Cardiac septum (tissue), 1 donor: ENCODE measurements at regions of chr12 and their contacts with region 1.

Region 1: DNA sequence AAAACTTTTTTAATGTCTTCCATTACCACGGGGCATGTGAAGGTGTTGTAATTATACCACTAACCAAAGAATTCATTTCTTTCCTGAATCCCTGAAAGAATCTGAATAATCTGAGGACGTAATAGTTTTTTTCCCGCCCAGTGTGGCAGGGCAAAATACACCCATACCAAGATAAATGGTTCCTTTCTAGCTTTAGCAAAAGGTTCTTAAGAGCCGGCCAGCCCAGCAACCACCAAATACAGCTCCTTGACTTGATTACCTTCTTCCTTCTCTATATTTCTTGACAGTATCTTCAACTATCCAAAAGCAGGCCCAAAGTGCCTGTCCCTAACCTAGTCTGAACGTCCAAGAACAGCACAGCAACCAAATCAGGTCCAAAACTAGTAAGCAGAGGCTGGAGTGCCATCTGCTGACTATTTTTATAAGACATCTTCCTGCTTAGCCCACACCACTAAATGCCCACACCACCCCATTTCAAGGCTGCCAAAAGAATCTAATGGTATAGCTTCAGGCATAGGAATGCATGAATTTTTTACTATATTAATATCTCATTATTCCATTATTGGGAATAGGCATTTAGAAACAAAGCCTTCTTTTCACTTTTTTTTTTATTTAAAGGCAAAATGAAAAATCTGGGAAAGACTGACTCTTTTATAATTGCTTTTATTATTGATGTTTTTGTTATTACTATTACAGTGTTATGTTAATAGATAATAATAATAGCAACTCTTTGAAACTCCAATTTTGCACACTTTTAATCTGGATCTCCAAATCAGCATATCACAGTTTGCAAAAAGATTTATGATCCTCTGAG is 524.4 kb downstream of the MED13L start:
- DNase-seq: no peak

Region 2: GRCh38 chr12:114662512-114663177 is 1090.5 kb before region 1 on chr12:
- intact Hi-C with region 1: loop called (anchors 2 kb)
- DNase-seq: no peak

Region 3: GRCh38 chr12:115451780-115452736 is 301.1 kb before region 1 on chr12:
- intact Hi-C with region 1: loop called (anchors 5 kb)
- DNase-seq: no peak

Region 4: GRCh38 chr12:115660211-115660805 is 92.8 kb before region 1 on chr12:
- intact Hi-C with region 1: loop called (anchors 5 kb)
- DNase-seq: no peak